ENCODE measurements at regions of chr12 and their contacts with region 1.

Region 1: GRCh38 chr12:71746983-71747611 is 7.6 kb upstream of the RAB21 start:
- DNase-seq: peak; percentile 34 to 67 (median 43)
- H3K4me3 ChIP-seq: no peak overlapping the region
- H3K27ac ChIP-seq: no peak overlapping the region
- H3K4me1 ChIP-seq: no peaks in the 10 kb centered on the region
- H3K27me3 ChIP-seq: peaks cover 3% of the 10 kb centered on the region
- CTCF ChIP-seq: peak; percentile 63 to 85 (median 78)
- POLR2A ChIP-seq: no peak

Region 2: GRCh38 chr12:71415336-71416231 is 331.5 kb before region 1 on chr12:
- intact Hi-C with region 1: loop called (anchors 5 to 10 kb)
- DNase-seq: peak in 6 of 7 donors; percentile 24 to 61 (median 32)
- H3K4me3 ChIP-seq: no peak overlapping the region
- H3K27ac ChIP-seq: no peak overlapping the region
- H3K4me1 ChIP-seq: no peaks in the 10 kb centered on the region
- H3K27me3 ChIP-seq: no peaks in the 10 kb centered on the region
- CTCF ChIP-seq: peak; percentile 57 to 80 (median 70)
- POLR2A ChIP-seq: no peak

Region 3: GRCh38 chr12:71981149-71981548 is 234.1 kb after region 1 on chr12:
- intact Hi-C with region 1: no loop called
- DNase-seq: no peak
- H3K4me3 ChIP-seq: no peak overlapping the region
- H3K27ac ChIP-seq: no peak overlapping the region
- H3K4me1 ChIP-seq: no peaks in the 10 kb centered on the region
- H3K27me3 ChIP-seq: no peaks in the 10 kb centered on the region
- CTCF ChIP-seq: no peak
- POLR2A ChIP-seq: no peak